H1 (cell line): ENCODE measurements at regions of chr11 and their contacts with region 1.

Region 1: GRCh38 chr11:66480117-66480938 is at the start of gene DPP3:
- DNase-seq: peak; percentile 93 to 98
- H3K4me3 ChIP-seq: peak within 1 kb of the TSS; percentile 76 to 94 (median 90)
- H3K27ac ChIP-seq: peak within 1 kb of the TSS; percentile 83; the same call in 1 of the 2 replicates
- H3K4me1 ChIP-seq: peaks cover 0 to 6% (median under 1%) of the 10 kb centered on the region in 4 experiments; a peak in 3 of 7 replicates
- H3K27me3 ChIP-seq: no peaks in the 10 kb centered on the region
- CTCF ChIP-seq: no peak
- EP300 ChIP-seq: 0 out of 3 replicates have a peak, but pooled peaks of 1 of the 2 experiments have one; percentile 2
- POLR2A ChIP-seq: peak; percentile 86 to 90
- RAD21 ChIP-seq: no peak
- total RNA-seq, gene DPP3: 82.7 and 86.4 TPM in 2 replicates

Region 2: GRCh38 chr11:66408488-66409214 is 71.7 kb before region 1 on chr11:
- CTCF ChIA-PET with region 1: interaction called, 12 read pairs
- POLR2A ChIA-PET with region 1: interaction called, 27 read pairs
- DNase-seq: peak; percentile 85 to 100
- H3K4me3 ChIP-seq: peak overlapping the region; percentile 8 to 68 (median 30)
- H3K27ac ChIP-seq: no peak overlapping the region
- H3K4me1 ChIP-seq: peaks cover 0 to 14% (median 11%) of the 10 kb centered on the region in 4 experiments; a peak in 6 of 7 replicates
- H3K27me3 ChIP-seq: peaks cover 0 to 10% (median 2%) of the 10 kb centered on the region in 4 experiments; a peak in 3 of 7 replicates
- CTCF ChIP-seq: peak; percentile 99 to 100 (median 100)
- EP300 ChIP-seq: no peak; a peak in 1 of 3 replicates
- POLR2A ChIP-seq: peak in 1 of 2 experiments; percentile 54; a peak in 2 of 3 replicates
- RAD21 ChIP-seq: peak; percentile 98 to 99

Region 3: GRCh38 chr11:66421492-66422205 is 58.7 kb before region 1 on chr11:
- CTCF ChIA-PET with region 1: interaction called, 25 read pairs
- POLR2A ChIA-PET with region 1: interaction called, 25 read pairs
- DNase-seq: peak; percentile 85 to 99
- H3K4me3 ChIP-seq: peak overlapping the region; percentile 17 to 61 (median 54); a peak in 7 of 8 replicates
- H3K27ac ChIP-seq: no peak overlapping the region
- H3K4me1 ChIP-seq: peaks cover 3 to 20% (median 8%) of the 10 kb centered on the region in 4 experiments
- H3K27me3 ChIP-seq: peaks cover 13 to 28% (median 26%) of the 10 kb centered on the region in 4 experiments
- CTCF ChIP-seq: peak in 1 of 3 experiments; percentile 25; a peak in 1 of 4 replicates
- EP300 ChIP-seq: peak; percentile 39 to 59; a peak in 2 of 3 replicates
- POLR2A ChIP-seq: peak in 1 of 2 experiments; percentile 22; a peak in 1 of 3 replicates
- RAD21 ChIP-seq: peak in 1 of 2 experiments; percentile 49; a peak in 2 of 4 replicates

Region 4: GRCh38 chr11:66466225-66467027 is 13.9 kb before region 1 on chr11 and contains the start of gene PELI3:
- CTCF ChIA-PET with region 1: interaction called, 18 read pairs
- POLR2A ChIA-PET with region 1: interaction called, 85 read pairs
- DNase-seq: peak; percentile 90 to 99
- H3K4me3 ChIP-seq: peak within 1 kb of the TSS; percentile 58 to 78 (median 70)
- H3K27ac ChIP-seq: peak within 1 kb of the TSS; percentile 21; the same call in 1 of the 2 replicates
- H3K4me1 ChIP-seq: peaks cover 7 to 25% (median 14%) of the 10 kb centered on the region in 4 experiments
- H3K27me3 ChIP-seq: no peaks in the 10 kb centered on the region; a peak in 1 of 7 replicates
- CTCF ChIP-seq: no peak
- EP300 ChIP-seq: no peak
- POLR2A ChIP-seq: peak in 1 of 2 experiments; percentile 49; a peak in 1 of 3 replicates
- RAD21 ChIP-seq: peak in 1 of 2 experiments; percentile 12; a peak in 1 of 4 replicates
- total RNA-seq, gene PELI3: 7.6 TPM in 2 replicates

Region 5: DNA sequence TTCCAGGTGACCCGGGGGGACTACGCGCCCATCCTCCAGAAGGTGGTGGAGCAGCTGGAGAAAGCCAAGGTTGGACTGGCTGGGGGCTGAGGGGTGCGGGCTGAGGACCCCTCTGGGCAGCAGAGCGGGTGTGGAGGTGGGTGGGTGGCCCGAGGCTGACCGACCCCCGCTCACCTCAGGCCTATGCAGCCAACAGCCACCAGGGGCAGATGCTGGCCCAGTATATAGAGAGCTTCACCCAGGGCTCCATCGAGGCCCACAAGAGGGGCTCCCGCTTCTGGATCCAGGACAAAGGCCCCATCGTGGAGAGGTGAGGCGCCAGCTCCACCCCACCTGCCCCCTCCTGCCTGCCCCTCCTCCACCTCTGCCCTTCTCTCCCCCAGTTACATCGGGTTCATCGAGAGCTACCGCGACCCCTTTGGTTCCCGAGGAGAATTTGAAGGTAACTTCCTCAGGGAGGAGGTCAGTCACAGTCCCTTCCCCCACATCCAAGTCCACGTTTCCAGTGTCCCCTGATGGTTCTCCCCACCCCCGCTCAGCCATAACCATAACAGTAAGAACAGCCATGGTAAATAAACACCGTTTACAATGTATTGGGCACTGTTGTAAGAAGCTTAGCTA is 11.1 kb after region 1 on chr11:
- CTCF ChIA-PET with region 1: interaction called, 9 read pairs
- POLR2A ChIA-PET with region 1: interaction called, 37 read pairs
- DNase-seq: peak in 1 of 2 experiments; percentile 81
- H3K4me3 ChIP-seq: peak overlapping the region in 1 of 4 experiments; percentile 10; a peak in 1 of 8 replicates
- H3K27ac ChIP-seq: no peak overlapping the region
- H3K4me1 ChIP-seq: peaks cover 0 to 12% (median 5%) of the 10 kb centered on the region in 4 experiments; a peak in 4 of 7 replicates
- H3K27me3 ChIP-seq: no peaks in the 10 kb centered on the region
- CTCF ChIP-seq: peak; percentile 64 to 82 (median 72)
- EP300 ChIP-seq: no peak
- POLR2A ChIP-seq: peak in 1 of 2 experiments; percentile 29; a peak in 1 of 3 replicates
- RAD21 ChIP-seq: peak; percentile 36 to 54; a peak in 3 of 4 replicates

Region 6: DNA sequence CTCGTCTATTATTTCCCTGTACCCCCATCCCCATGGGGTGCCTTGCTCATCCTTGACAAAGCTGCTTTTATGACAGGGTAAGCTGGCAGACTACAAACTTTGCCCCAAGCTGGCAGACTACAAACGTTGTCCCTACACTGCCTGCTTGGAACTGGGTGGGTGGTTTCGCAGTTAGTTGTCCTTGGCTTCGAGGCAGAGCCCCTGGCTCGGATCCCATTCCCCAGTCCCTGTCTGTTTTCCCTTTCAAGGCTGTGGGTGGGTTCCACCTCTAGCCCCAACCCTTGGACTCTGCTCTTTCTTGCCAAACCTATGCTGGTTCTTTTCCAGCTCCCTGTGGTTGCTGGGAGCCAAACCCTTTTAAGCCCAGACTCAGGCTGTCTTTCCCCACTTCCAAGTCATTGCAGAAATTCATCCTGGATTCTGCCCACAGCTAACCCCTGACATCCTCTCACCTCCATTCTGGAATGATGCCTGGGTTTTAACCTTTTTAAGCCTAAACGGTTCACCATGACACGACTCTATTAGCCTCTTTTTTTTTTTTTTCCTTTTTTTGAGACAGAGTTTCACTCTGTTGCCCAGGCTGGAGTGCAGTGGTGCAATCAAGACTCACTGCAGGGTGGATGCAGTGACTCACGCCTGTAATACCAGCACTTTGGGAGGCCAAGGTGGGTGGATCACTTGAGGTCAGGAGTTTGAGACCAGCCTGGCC is 127.0 kb after region 1 on chr11:
- CTCF ChIA-PET with region 1: no interaction called
- POLR2A ChIA-PET with region 1: no interaction called
- DNase-seq: no peak
- H3K4me3 ChIP-seq: no peak overlapping the region
- H3K27ac ChIP-seq: no peak overlapping the region
- H3K4me1 ChIP-seq: no peaks in the 10 kb centered on the region
- H3K27me3 ChIP-seq: no peaks in the 10 kb centered on the region
- CTCF ChIP-seq: no peak
- EP300 ChIP-seq: no peak
- POLR2A ChIP-seq: no peak
- RAD21 ChIP-seq: no peak